ENCODE measurements at regions of chr12 and their contacts with region 1.

Region 1: DNA sequence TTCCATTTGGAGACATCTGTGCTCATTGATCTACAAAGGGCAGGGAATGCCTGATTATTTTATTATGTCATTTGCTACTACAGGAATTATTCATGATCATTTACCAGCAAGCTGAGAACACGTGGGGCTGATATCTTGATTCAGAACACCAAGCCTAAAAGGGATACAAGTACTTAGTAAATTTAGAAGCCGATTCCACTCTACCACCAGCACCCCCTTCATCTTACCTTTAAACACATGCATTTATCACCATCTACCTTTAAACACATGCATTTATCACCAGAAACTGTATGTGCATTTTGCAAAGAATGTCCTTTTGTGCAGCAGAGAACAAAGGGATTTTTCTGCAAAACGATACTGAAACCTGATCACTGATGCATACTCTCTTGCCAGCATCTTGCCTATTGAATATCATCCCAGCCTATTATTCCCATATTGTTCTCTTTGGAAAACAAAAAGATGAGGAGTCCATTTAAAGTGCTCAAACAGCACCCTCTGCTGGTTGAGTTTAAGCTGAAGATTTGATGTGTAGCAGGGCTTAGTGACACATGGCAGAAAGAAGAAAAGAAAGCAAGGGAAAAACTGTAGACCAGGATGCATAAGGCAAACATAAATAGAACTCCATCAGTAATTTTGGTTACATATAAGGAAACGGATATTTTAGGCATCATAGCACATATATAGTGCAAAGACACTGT is 132.6 kb upstream of the PLEKHG7 start:
- DNase-seq: peak in 1 of 2 donors; percentile 82
- ATAC-seq: peak; percentile 67 to 92 (median 86)
- H3K4me3 ChIP-seq: no peak overlapping the region
- H3K27ac ChIP-seq: peak overlapping the region in 2 of 10 donors; percentile 23 to 58
- H3K4me1 ChIP-seq: peaks cover 0 to 38% (median 8%) of the 10 kb centered on the region in 9 donors
- H3K27me3 ChIP-seq: no peaks in the 10 kb centered on the region
- CTCF ChIP-seq: peak; percentile 70 to 89 (median 82)

Region 2: GRCh38 chr12:91577586-91578539 is 992.3 kb before region 1 on chr12:
- intact Hi-C with region 1: loop called in 4 of 10 experiments (anchors 5 to 10 kb)
- DNase-seq: no peak
- ATAC-seq: peak in 6 of 8 donors; percentile 39 to 70 (median 61)
- H3K4me3 ChIP-seq: peak overlapping the region in 7 of 10 donors; percentile 16 to 33 (median 26)
- H3K27ac ChIP-seq: peak overlapping the region in 2 of 10 donors; percentile 2 to 11
- H3K4me1 ChIP-seq: peaks cover 0 to 17% (median 9%) of the 10 kb centered on the region in 9 donors
- H3K27me3 ChIP-seq: no peaks in the 10 kb centered on the region
- CTCF ChIP-seq: peak; percentile 56 to 84 (median 74)

Region 3: GRCh38 chr12:91811481-91812287 is 758.5 kb before region 1 on chr12:
- intact Hi-C with region 1: loop called in 9 of 10 experiments (anchors 1 to 10 kb)
- DNase-seq: peak; percentile 70 to 71
- ATAC-seq: peak in 6 of 8 donors; percentile 65 to 84 (median 75)
- H3K4me3 ChIP-seq: no peak overlapping the region
- H3K27ac ChIP-seq: peak overlapping the region in 1 of 10 donors; percentile 11
- H3K4me1 ChIP-seq: peaks cover 0 to 8% (median 0%) of the 10 kb centered on the region in 9 donors
- H3K27me3 ChIP-seq: no peaks in the 10 kb centered on the region
- CTCF ChIP-seq: peak; percentile 71 to 90 (median 84)

Region 4: GRCh38 chr12:91991399-91992187 is 578.6 kb before region 1 on chr12:
- intact Hi-C with region 1: loop called in 2 of 10 experiments (anchors 10 kb)
- DNase-seq: no peak
- ATAC-seq: peak in 2 of 8 donors; percentile 24 to 25
- H3K4me3 ChIP-seq: no peak overlapping the region
- H3K27ac ChIP-seq: peak overlapping the region in 2 of 10 donors; percentile 45 to 55
- H3K4me1 ChIP-seq: peaks cover 0 to 57% (median 35%) of the 10 kb centered on the region in 9 donors
- H3K27me3 ChIP-seq: no peaks in the 10 kb centered on the region
- CTCF ChIP-seq: peak in 1 of 9 donors; percentile 23

Region 5: DNA sequence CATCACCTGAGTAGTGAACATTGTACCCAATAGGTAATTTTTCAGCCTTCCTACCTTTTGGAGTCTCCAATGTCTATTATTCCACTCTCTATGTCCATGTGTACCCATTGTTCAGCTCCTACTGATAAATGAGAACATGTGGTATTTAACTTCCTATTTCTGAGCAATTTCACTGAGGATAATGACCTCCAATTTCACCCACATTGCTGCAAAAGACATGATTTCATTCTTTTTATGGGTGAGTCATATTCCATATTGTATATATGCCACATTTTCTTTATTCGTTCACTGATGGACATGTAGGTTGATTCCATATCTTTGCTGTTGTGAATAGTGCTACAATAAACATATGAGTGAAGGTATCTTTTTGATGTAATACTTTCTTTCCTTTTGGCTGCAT is 408.1 kb before region 1 on chr12:
- intact Hi-C with region 1: no loop called
- DNase-seq: no peak
- ATAC-seq: no peak
- H3K4me3 ChIP-seq: no peak overlapping the region
- H3K27ac ChIP-seq: no peak overlapping the region
- H3K4me1 ChIP-seq: peaks cover 0 to 22% (median 0%) of the 10 kb centered on the region in 9 donors
- H3K27me3 ChIP-seq: no peaks in the 10 kb centered on the region
- CTCF ChIP-seq: no peak

Region 6: DNA sequence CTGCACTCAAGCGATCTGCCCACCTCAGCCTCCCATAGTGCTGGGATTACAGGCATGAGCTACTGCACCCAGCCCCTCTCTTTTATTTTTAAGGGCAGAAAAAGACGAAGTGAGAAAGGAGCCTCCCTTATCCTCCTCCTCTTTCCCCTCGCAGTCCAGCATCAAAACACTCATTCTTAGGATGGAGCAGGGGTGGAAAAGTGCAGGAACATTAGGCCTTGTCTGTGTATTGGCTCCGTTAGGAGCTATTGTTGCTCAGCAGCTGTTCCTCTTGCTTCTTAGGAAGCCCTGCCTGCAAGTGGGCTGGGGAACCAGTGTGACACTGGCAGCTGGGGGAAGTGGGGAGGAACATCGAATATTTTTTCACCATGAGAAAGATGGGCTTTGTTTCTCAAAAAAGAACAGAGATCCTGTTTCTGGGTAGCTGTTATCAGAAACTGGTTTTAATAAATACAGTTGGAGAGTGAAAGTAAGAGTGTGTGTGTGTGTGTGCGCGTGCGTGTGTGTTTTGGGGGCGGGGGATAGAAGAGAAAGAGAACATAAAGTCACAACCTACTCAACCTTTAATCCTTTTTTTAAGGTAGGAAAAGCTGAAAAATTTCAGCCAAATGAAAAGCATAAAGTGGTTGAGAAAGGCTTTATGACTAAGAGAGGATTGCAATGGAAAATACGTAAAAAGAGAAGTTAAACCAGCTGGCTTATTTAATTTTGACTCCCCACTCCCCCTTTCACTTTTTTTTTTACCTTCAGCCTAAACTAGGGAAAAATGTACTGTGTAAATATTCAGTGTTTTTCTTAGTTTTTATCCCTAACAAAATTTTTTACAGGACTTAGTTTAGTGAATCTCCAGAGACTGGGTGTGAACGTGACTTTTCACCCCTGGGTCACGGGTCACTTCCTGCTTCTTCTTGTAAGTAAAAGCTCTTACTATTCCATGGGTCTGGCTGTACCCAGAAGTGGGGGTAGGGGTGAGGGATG is 64.7 kb before region 1 on chr12:
- intact Hi-C with region 1: loop called in 3 of 10 experiments (anchors 5 kb)
- DNase-seq: peak; percentile 65 to 80
- ATAC-seq: peak; percentile 63 to 87 (median 78)
- H3K4me3 ChIP-seq: peak overlapping the region in 6 of 10 donors; percentile 16 to 33 (median 30)
- H3K27ac ChIP-seq: peak overlapping the region; percentile 61 to 95 (median 80)
- H3K4me1 ChIP-seq: peaks cover 14 to 59% (median 40%) of the 10 kb centered on the region in 9 donors
- H3K27me3 ChIP-seq: no peaks in the 10 kb centered on the region
- CTCF ChIP-seq: no peak

Measured in heart right ventricle (tissue), 16 donors.